ENCODE measurements at regions of chr19 and their contacts with region 1.

Region 1: GRCh38 chr19:19531951-19532805 is 3.5 kb downstream of the YJEFN3 start:
- DNase-seq: peak; percentile 85
- H3K4me3 Mint-ChIP-seq: no peak overlapping the region
- H3K27ac Mint-ChIP-seq: no peak overlapping the region
- H3K4me1 Mint-ChIP-seq: peaks cover 15% of the 10 kb centered on the region
- H3K27me3 Mint-ChIP-seq: peaks cover 3% of the 10 kb centered on the region

Region 2: DNA sequence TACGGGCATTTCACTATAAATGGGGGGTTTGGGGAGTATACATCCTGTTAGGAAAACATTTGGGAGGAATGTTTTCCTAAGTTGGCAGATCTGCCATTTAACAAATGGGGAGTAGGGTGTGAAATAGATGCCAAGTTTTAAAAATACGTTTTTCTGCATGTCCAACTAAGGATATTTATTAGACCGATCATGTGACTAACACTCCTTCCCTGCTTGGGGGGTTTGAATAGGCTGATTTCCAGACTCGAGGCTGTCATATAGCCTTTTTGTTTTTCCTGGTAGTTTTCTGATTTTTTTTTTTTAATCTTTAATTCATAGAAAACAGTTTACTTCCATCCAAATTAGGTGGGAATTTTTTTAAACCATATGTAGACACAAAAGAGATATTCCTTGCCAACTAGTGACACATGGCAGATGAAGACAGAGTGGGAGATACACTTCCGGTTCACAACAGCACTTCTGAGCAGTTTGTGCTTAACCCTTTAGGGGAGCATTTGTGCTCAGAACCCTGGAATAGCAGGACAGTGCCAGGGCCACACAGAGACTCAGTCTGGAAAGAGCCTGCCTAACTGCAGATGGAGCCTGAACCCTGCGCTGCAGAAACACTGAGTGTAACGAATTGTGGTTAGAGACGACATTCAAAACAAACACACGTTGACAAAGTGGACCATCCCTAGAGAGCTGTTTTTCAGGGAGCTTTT is 132.3 kb before region 1 on chr19:
- CTCF ChIA-PET with region 1: no interaction called
- POLR2A ChIA-PET with region 1: no interaction called
- DNase-seq: no peak
- H3K4me3 Mint-ChIP-seq: no peak overlapping the region
- H3K27ac Mint-ChIP-seq: no peak overlapping the region
- H3K4me1 Mint-ChIP-seq: peaks cover 36% of the 10 kb centered on the region
- H3K27me3 Mint-ChIP-seq: no peaks in the 10 kb centered on the region

Region 3: GRCh38 chr19:19468424-19469050 is 63.6 kb before region 1 on chr19:
- CTCF ChIA-PET with region 1: no interaction called
- POLR2A ChIA-PET with region 1: no interaction called
- DNase-seq: no peak
- H3K4me3 Mint-ChIP-seq: no peak overlapping the region
- H3K27ac Mint-ChIP-seq: peak overlapping the region; percentile 21
- H3K4me1 Mint-ChIP-seq: peaks cover 53% of the 10 kb centered on the region
- H3K27me3 Mint-ChIP-seq: no peaks in the 10 kb centered on the region

Region 4: DNA sequence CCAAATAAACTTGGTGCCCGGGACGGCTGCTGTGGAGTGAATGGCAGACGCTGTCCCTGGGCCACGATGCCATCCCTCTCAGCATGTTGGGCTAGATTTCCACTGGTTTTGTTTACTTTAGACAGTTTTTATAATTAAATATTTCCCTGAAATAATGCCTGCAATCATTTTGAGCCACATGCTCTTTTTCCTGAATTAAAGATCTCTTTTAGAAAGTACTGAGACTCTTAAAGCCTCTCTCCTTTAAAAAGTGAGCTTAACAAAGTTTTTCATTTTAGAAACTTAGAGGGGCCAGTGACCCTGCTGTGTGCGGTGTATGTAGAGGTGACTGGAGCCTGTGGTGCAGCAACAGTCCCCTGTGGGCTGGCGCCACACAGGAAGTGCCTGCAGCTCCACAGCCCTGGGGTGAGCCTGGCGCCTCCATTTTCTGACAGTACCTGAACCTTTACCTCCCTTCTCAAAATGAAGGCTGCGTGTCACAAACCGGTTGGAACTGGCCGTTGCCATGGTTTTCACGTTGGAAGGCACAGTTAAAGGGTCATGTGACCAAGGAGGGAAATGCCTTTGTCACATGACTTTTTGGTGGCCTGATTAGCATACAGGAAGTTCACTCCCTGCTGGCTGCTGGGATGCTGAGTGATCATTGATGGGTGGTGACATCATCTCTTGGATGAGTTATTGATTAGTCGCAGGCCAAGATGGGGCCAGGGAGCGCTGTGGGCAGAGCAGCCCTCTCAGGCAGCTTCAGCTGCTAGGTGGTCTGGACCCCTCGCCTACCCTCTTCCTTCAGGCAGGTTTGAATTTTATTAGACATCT is 43.1 kb before region 1 on chr19:
- CTCF ChIA-PET with region 1: no interaction called
- POLR2A ChIA-PET with region 1: no interaction called
- DNase-seq: peak; percentile 98
- H3K4me3 Mint-ChIP-seq: peak overlapping the region; percentile 62
- H3K27ac Mint-ChIP-seq: peak overlapping the region; percentile 100
- H3K4me1 Mint-ChIP-seq: peaks cover 48% of the 10 kb centered on the region
- H3K27me3 Mint-ChIP-seq: no peaks in the 10 kb centered on the region

Region 5: DNA sequence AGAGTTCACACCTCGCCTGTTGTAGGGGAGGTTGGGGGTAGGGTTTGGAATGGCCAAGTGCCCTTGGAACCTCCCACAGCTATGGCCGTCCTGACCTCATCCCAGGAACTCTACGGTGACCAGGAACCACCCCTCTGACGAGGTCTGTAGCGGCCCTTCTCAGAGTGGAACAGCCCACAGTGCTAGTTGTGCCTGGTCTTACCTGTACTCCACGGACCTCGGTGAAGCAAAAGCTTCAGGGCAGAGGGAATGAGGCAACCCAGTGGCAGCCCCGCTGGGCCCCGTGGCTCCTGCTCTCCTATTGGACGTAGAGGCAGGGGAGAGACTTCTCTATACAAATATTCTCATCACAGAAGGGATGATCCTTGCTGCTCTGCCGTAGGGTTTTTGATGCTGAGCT is 24.0 kb before region 1 on chr19:
- CTCF ChIA-PET with region 1: no interaction called
- POLR2A ChIA-PET with region 1: no interaction called
- DNase-seq: no peak
- H3K4me3 Mint-ChIP-seq: no peak overlapping the region
- H3K27ac Mint-ChIP-seq: no peak overlapping the region
- H3K4me1 Mint-ChIP-seq: no peaks in the 10 kb centered on the region
- H3K27me3 Mint-ChIP-seq: no peaks in the 10 kb centered on the region

Region 6: DNA sequence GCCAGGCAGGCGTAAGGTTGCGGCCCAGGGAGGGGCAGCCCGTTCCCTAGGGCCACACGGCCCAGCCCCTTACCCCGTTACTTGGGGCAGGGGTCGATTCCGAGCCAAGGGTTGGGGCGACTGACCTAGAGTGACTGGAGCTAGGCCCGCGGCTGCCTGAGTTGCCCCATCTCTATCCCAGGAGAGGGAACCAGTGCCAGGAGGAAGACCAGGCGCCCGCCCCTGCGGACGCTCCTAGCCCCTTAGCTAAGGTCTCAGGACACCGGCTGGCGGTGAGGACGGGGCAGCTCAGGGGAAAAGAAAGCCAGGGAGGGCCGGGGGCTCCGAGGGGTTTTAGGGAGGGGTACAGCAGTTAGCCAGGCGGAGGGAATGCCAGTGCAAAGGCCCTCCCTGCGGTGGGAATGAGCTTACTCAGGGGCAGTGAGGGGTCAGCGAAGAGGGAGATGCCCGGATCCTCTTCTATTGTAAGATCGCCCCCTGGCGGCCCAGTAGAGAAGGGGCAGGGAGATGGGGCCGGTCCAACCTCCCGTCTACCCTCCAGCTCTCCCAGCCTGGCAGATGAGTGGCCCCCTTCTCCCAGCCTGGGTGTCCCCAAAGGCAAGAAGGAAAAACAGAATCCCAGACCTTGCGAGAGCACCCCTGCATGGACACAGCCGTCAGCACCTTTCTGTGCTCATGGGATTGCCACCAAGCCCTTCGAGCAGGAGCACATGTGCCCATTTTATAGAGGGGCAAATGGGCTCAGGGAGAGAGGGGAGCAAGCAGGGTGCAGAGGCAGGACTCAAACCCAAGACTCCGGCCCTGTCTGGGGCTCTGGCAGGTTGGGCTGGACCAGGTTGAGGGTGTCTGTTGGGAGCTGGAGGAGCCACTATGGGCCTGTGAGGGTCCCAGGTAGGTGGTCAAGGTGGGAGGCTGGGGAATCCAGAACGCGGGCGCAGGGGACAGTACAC is 22.2 kb after region 1 on chr19:
- CTCF ChIA-PET with region 1: interaction called, 19 read pairs
- POLR2A ChIA-PET with region 1: no interaction called
- DNase-seq: peak; percentile 60
- H3K4me3 Mint-ChIP-seq: no peak overlapping the region
- H3K27ac Mint-ChIP-seq: peak overlapping the region; percentile 9
- H3K4me1 Mint-ChIP-seq: peaks cover 10% of the 10 kb centered on the region
- H3K27me3 Mint-ChIP-seq: no peaks in the 10 kb centered on the region

Region 7: GRCh38 chr19:19643158-19644053 is 111.2 kb after region 1 on chr19 and contains the start of gene GMIP:
- CTCF ChIA-PET with region 1: interaction called, 19 read pairs
- POLR2A ChIA-PET with region 1: no interaction called
- DNase-seq: peak; percentile 88
- H3K4me3 Mint-ChIP-seq: peak within 1 kb of the TSS; percentile 87
- H3K27ac Mint-ChIP-seq: peak within 1 kb of the TSS; percentile 95
- H3K4me1 Mint-ChIP-seq: peaks cover 21% of the 10 kb centered on the region
- H3K27me3 Mint-ChIP-seq: no peaks in the 10 kb centered on the region
- total RNA-seq, gene GMIP: 101 to 111 TPM

Measured in activated CD4-positive, alpha-beta T cell treated with anti-CD3 and anti-CD28 coated beads, Interleukin-2, amount 10 ng/mL, durations not matched to agents 7 days and 5 days (primary cell).